ENCODE measurements at regions of chr7 and their contacts with region 1.

Region 1: DNA sequence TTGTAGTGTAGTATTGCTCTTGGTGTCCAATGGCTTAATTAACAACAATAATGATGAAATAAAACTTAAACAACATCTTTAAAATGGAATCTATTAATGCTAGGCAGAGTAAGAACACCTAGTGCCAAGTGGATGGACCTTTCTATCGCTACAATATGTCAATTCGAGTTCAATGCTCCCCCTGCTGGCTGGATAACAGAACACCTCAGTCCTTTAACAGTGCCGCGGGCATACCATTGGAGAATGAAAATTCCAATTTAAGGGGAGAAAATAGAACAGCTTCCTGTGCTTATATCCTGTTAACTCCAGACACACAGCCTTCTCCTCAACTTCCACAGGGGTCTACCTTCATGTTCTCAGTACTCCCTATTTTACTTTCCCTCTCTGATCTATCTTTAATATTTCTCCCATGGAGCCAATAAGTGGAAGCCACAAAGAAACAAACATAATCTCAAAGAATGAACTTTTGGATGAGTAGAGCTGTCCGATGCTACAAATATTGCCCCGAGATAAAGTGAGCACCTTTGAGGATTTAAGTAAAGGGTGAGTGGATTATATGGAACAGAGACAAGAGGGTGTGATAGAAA is 41.4 kb downstream of the COL1A2 start:
- DNase-seq: peak; percentile 71
- ATAC-seq: peak; percentile 78
- H3K4me3 ChIP-seq: no peak overlapping the region
- H3K4me3 Mint-ChIP-seq: no peak overlapping the region
- H3K27ac ChIP-seq: no peak overlapping the region
- H3K27ac Mint-ChIP-seq: no peak overlapping the region
- H3K4me1 ChIP-seq: no peaks in the 10 kb centered on the region
- H3K4me1 Mint-ChIP-seq: no peaks in the 10 kb centered on the region
- H3K27me3 ChIP-seq: peaks cover 0 to 14% (median 7%) of the 10 kb centered on the region in 4 experiments
- H3K27me3 Mint-ChIP-seq: peaks cover 26% of the 10 kb centered on the region
- CTCF ChIP-seq: peak; percentile 90

Region 2: GRCh38 chr7:93245525-93246432 is 1190.3 kb before region 1 on chr7:
- CTCF ChIA-PET with region 1: interaction called, 9 read pairs
- POLR2A ChIA-PET with region 1: no interaction called
- intact Hi-C with region 1: loop called (anchors 1 kb)
- DNase-seq: peak; percentile 54
- ATAC-seq: peak; percentile 28
- H3K4me3 ChIP-seq: no peak overlapping the region
- H3K4me3 Mint-ChIP-seq: no peak overlapping the region
- H3K27ac ChIP-seq: no peak overlapping the region
- H3K27ac Mint-ChIP-seq: no peak overlapping the region
- H3K4me1 ChIP-seq: no peaks in the 10 kb centered on the region
- H3K4me1 Mint-ChIP-seq: peaks cover 6% of the 10 kb centered on the region
- H3K27me3 ChIP-seq: no peaks in the 10 kb centered on the region
- H3K27me3 Mint-ChIP-seq: no peaks in the 10 kb centered on the region
- CTCF ChIP-seq: peak; percentile 86

Region 3: DNA sequence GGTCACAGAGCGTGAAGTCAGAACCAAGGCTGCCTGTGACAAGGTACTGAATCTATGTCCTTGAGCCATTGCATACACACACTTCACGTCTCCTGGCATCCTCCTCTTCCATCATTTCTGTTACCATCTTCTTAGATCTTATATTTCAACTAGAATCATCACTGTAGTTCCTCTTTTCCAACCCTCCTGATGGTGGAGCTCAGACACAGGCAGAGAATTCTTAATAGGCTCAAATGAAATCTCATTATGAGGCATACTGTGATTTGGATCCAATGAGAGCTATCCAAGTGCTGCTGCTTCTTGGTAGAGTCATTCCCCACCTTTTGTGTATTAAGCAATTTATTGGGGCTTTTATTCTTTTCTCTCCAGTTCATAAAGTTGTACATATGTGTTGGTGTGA is 974.8 kb before region 1 on chr7:
- CTCF ChIA-PET with region 1: no interaction called
- POLR2A ChIA-PET with region 1: no interaction called
- intact Hi-C with region 1: loop called (anchors 5 kb)
- DNase-seq: peak; percentile 21
- ATAC-seq: no peak
- H3K4me3 ChIP-seq: no peak overlapping the region
- H3K4me3 Mint-ChIP-seq: no peak overlapping the region
- H3K27ac ChIP-seq: no peak overlapping the region
- H3K27ac Mint-ChIP-seq: no peak overlapping the region
- H3K4me1 ChIP-seq: no peaks in the 10 kb centered on the region
- H3K4me1 Mint-ChIP-seq: no peaks in the 10 kb centered on the region
- H3K27me3 ChIP-seq: no peaks in the 10 kb centered on the region
- H3K27me3 Mint-ChIP-seq: peaks cover 21% of the 10 kb centered on the region
- CTCF ChIP-seq: peak; percentile 23

Region 4: DNA sequence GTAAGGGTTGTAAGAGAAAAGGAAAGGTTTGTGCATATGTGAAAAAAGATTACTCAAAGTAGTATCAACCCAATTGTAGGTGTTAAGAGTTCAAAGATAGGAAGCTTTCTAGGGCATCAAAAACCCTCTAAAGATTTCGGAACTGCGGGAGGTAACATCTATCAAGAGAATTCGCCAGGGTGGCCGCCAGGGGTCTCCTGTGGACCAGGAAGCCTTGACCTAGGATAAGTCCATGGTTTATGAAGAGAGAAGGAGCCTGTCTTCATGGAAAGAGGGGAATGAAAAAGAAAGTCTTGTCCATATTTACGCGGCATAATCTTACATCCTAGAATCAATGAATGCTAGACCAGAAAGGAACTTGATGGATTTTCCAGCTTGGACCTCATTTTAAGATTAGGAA is 720.9 kb before region 1 on chr7:
- CTCF ChIA-PET with region 1: interaction called, 3 read pairs
- POLR2A ChIA-PET with region 1: no interaction called
- intact Hi-C with region 1: loop called (anchors 1 kb)
- DNase-seq: peak; percentile 40
- ATAC-seq: no peak
- H3K4me3 ChIP-seq: no peak overlapping the region
- H3K4me3 Mint-ChIP-seq: no peak overlapping the region
- H3K27ac ChIP-seq: no peak overlapping the region
- H3K27ac Mint-ChIP-seq: no peak overlapping the region
- H3K4me1 ChIP-seq: no peaks in the 10 kb centered on the region
- H3K4me1 Mint-ChIP-seq: no peaks in the 10 kb centered on the region
- H3K27me3 ChIP-seq: peaks cover 0 to 9% (median 0%) of the 10 kb centered on the region in 4 experiments
- H3K27me3 Mint-ChIP-seq: peaks cover 28% of the 10 kb centered on the region
- CTCF ChIP-seq: peak; percentile 46

Region 5: DNA sequence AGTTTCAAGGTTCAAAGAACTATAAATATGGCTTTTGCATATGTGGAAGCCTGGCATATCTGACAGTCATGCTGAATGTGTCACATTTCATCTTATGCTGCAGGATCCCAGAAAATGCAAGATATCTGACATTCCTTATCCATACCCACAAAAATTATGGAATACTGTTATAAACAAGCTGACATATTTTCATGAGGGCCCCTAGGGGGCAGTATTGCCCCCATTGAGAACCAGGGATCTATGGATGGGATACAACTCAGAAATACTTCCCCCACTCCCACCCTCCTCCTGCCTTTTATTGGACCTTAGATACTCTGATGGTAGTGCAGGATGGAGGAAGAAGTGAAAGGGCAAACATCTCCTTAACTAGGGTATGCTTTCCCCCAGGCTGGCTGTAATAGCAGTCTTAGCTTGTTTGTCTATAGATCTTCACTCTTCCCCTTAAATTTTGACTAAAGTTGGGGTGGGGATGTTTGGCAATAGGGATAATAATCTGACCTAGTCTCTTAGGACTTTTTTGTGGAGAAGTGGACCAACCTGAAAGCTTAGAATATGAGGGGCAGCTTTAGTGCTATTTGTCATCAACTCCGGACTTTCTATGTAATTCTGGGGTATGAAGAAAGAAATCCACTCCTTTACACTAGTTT is 533.2 kb before region 1 on chr7:
- CTCF ChIA-PET with region 1: interaction called, 4 read pairs
- POLR2A ChIA-PET with region 1: no interaction called
- intact Hi-C with region 1: loop called (anchors 2 kb)
- DNase-seq: peak; percentile 66
- ATAC-seq: peak; percentile 41
- H3K4me3 ChIP-seq: no peak overlapping the region
- H3K4me3 Mint-ChIP-seq: no peak overlapping the region
- H3K27ac ChIP-seq: no peak overlapping the region
- H3K27ac Mint-ChIP-seq: no peak overlapping the region
- H3K4me1 ChIP-seq: no peaks in the 10 kb centered on the region
- H3K4me1 Mint-ChIP-seq: no peaks in the 10 kb centered on the region
- H3K27me3 ChIP-seq: no peaks in the 10 kb centered on the region
- H3K27me3 Mint-ChIP-seq: peaks cover 25% of the 10 kb centered on the region
- CTCF ChIP-seq: peak; percentile 80

Measured in B cell (primary cell).